ENCODE measurements at regions of chr13 and their contacts with region 1.

Region 1: DNA sequence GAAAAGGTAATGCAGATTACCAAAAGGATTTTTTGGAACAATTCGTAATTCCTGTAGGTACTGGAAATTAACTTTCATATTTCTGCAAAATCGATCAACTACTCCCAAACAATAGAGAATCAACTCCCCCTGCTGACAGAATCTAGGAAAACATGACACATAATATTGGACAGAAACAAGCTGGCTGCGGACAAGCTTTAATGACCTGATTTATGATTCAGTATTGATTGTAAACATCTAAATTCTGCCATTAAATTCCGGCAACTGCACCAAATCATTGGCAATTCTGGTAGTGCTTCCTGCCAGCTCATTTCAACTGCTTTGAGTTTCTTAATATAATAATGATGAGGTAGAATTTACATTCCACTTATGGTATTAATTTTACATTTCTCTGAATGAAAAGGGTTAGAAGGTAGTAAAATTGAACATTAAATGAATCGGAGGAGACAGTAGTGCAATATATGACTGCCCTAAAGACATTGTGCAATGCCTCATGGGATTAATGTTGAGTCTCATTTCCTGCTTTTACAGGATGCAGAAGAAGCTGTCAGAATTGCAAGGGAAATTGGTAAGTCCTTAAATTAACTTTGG is 146.5 kb downstream of the PCCA start:
- DNase-seq: peak; percentile 99
- H3K4me3 ChIP-seq: peak overlapping the region; percentile 27
- H3K27ac ChIP-seq: peak overlapping the region; percentile 82
- H3K4me1 ChIP-seq: peaks cover 59% of the 10 kb centered on the region
- H3K27me3 ChIP-seq: no peaks in the 10 kb centered on the region
- CTCF ChIP-seq: peak; percentile 73

Region 2: GRCh38 chr13:99766641-99767045 is 468.8 kb before region 1 on chr13:
- CTCF ChIA-PET with region 1: no interaction called
- POLR2A ChIA-PET with region 1: no interaction called
- intact Hi-C with region 1: loop called (anchors 2 kb)
- DNase-seq: peak; percentile 74
- H3K4me3 ChIP-seq: no peak overlapping the region
- H3K27ac ChIP-seq: no peak overlapping the region
- H3K4me1 ChIP-seq: no peaks in the 10 kb centered on the region
- H3K27me3 ChIP-seq: no peaks in the 10 kb centered on the region
- CTCF ChIP-seq: peak; percentile 63

Region 3: GRCh38 chr13:99900960-99901359 is 334.4 kb before region 1 on chr13:
- CTCF ChIA-PET with region 1: no interaction called
- POLR2A ChIA-PET with region 1: no interaction called
- intact Hi-C with region 1: loop called (anchors 5 kb)
- DNase-seq: no peak
- H3K4me3 ChIP-seq: no peak overlapping the region
- H3K27ac ChIP-seq: no peak overlapping the region
- H3K4me1 ChIP-seq: peaks cover 14% of the 10 kb centered on the region
- H3K27me3 ChIP-seq: no peaks in the 10 kb centered on the region
- CTCF ChIP-seq: no peak

Region 4: GRCh38 chr13:99916366-99917103 is 318.9 kb before region 1 on chr13:
- CTCF ChIA-PET with region 1: interaction called, 4 read pairs
- POLR2A ChIA-PET with region 1: no interaction called
- intact Hi-C with region 1: loop called (anchors 2 kb)
- DNase-seq: peak; percentile 85
- H3K4me3 ChIP-seq: no peak overlapping the region
- H3K27ac ChIP-seq: no peak overlapping the region
- H3K4me1 ChIP-seq: peaks cover 19% of the 10 kb centered on the region
- H3K27me3 ChIP-seq: no peaks in the 10 kb centered on the region
- CTCF ChIP-seq: peak; percentile 99

Region 5: GRCh38 chr13:99995589-99996380 is 239.6 kb before region 1 on chr13:
- CTCF ChIA-PET with region 1: no interaction called
- POLR2A ChIA-PET with region 1: no interaction called
- intact Hi-C with region 1: loop called (anchors 2 kb)
- DNase-seq: peak; percentile 83
- H3K4me3 ChIP-seq: peak overlapping the region; percentile 48
- H3K27ac ChIP-seq: peak overlapping the region; percentile 96
- H3K4me1 ChIP-seq: peaks cover 51% of the 10 kb centered on the region
- H3K27me3 ChIP-seq: no peaks in the 10 kb centered on the region
- CTCF ChIP-seq: no peak

Region 6: DNA sequence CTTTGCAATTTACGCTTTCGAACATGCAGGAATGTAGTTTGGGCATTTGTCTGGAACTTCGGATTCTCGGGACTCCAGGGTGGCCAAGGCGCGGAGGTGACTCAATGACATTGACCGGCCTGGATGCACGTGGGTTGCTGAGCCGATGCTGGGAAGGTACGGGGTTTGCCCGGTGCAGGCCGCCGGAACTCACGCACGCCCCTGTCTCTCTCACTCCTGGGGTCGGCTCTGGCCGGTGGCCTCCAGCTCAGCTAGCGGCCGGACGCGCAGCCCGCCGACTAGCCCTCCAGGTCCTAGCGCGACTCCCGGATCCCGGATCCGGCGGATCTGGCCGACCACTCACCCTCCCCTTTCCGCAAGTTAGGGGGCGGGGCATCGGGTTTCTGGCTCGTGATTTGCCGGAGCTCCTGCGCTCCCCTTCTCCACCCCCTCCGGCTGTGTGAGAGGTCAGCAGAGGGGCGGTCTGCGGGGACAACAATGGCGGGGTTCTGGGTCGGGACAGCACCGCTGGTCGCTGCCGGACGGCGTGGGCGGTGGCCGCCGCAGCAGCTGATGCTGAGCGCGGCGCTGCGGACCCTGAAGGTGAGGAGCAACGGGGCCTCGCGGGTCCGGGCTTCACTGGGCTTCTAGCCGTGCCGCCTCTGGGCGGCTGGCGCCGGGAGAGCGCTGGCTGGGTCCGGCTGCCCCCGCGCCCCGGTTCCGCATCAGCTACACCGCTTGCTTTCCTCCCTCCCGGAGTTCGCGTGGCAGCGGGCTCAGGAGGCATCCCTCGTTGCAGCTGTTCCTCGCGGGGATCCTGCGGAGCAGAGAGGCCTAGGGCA is 146.6 kb before region 1 on chr13 and contains the start of gene PCCA:
- CTCF ChIA-PET with region 1: interaction called, 4 read pairs
- POLR2A ChIA-PET with region 1: no interaction called
- intact Hi-C with region 1: loop called (anchors 2 kb)
- DNase-seq: peak; percentile 92
- H3K4me3 ChIP-seq: peak within 1 kb of the TSS; percentile 83
- H3K27ac ChIP-seq: peak within 1 kb of the TSS; percentile 56
- H3K4me1 ChIP-seq: no peaks in the 10 kb centered on the region
- H3K27me3 ChIP-seq: no peaks in the 10 kb centered on the region
- CTCF ChIP-seq: no peak
- total RNA-seq, gene PCCA: 93.0 and 105 TPM in 2 replicates

Region 7: DNA sequence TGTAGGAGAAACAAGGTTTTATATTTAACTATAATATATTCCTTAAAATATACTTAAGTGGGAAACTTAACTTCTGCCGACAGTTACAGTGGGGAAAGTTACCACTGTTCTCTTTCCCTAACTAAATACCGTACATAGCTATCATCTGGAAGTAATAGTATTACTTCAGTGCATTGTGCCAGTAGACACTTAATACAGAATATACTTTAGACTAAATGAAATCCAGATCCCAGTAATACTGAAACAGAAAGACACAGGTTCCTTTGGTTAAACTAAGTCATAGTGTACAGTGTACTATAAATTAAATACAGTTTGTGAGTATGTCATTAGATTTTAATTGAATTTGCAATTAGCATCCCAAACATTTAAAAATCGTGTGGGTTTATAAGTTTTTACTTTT is 39.0 kb before region 1 on chr13:
- CTCF ChIA-PET with region 1: no interaction called
- POLR2A ChIA-PET with region 1: no interaction called
- intact Hi-C with region 1: no loop called
- DNase-seq: no peak
- H3K4me3 ChIP-seq: no peak overlapping the region
- H3K27ac ChIP-seq: no peak overlapping the region
- H3K4me1 ChIP-seq: no peaks in the 10 kb centered on the region
- H3K27me3 ChIP-seq: no peaks in the 10 kb centered on the region
- CTCF ChIP-seq: no peak

Measured in A673 (cell line).